ENCODE measurements at regions of chr11 and their contacts with region 1.

Region 1: DNA sequence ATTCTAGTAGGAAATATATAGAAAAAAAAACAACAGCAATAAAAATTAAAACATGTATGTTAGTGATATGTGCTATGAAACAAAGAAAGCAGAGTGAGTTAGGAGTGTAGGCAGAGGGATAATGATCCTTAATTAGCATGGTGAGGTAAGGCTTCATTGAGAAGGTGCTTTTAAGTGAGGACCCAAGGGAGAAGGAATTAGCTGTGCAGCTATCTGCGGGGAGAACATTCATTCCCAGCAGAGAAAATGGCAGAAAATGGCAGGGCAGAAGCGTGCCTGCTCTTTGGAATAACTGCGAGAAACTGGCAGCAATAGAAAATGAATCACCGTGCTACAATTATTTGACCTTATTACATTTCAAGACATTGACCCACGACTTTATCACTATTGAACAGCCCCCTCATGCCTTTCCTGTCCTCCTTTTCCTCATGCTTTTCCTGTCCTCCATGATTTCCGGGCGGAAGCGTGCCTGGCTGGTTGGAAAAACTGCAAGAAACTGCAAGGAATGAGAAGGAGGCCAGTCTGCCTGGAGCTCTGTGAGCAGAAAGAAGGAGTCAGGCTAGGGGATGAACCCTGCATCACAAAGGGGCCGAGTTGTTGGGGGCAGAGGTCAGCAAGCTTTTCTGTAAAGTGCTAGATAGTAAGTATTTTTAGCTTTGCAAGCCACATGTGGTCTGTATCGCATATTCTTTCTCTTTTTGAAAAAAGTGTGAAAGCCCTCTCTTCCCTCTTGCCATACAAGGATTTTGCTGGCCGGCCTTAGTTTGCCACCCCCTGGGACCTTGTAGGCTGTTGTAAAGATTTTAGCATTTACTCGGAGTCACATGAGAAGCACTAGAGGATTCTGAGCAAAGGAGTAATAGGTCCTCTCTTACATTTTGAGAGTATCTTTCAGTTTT is 37.1 kb upstream of the SWAP70 start:
- DNase-seq: no peak
- ATAC-seq: no peak
- H3K4me3 Mint-ChIP-seq: no peak overlapping the region
- H3K27ac Mint-ChIP-seq: peak overlapping the region; percentile 70
- H3K4me1 Mint-ChIP-seq: peaks cover 66% of the 10 kb centered on the region
- H3K27me3 Mint-ChIP-seq: no peaks in the 10 kb centered on the region
- CTCF ChIP-seq: no peak

Region 2: GRCh38 chr11:9643751-9644150 is 17.0 kb after region 1 on chr11:
- CTCF ChIA-PET with region 1: no interaction called
- POLR2A ChIA-PET with region 1: interaction called, 12 read pairs
- intact Hi-C with region 1: no loop called
- DNase-seq: no peak
- ATAC-seq: peak; percentile 67
- H3K4me3 Mint-ChIP-seq: peak overlapping the region; percentile 28
- H3K27ac Mint-ChIP-seq: peak overlapping the region; percentile 77
- H3K4me1 Mint-ChIP-seq: peaks cover 69% of the 10 kb centered on the region
- H3K27me3 Mint-ChIP-seq: no peaks in the 10 kb centered on the region
- CTCF ChIP-seq: no peak